Activated CD4-positive, alpha-beta memory T cell treated with anti-CD3 and anti-CD28 coated beads for 36 hours (primary cell): ENCODE measurements at regions of chr13 and their contacts with region 1.

Region 1: GRCh38 chr13:72727417-72728289 is at the starts of genes BORA and MZT1:
- DNase-seq: peak; percentile 98
- H3K4me3 Mint-ChIP-seq: peak within 1 kb of the TSS; percentile 93
- H3K27ac Mint-ChIP-seq: peak within 1 kb of the TSS; percentile 76
- H3K4me1 Mint-ChIP-seq: peaks cover 41% of the 10 kb centered on the region
- H3K27me3 Mint-ChIP-seq: peaks cover 2% of the 10 kb centered on the region
- total RNA-seq, gene BORA: 18.4 to 19.1 TPM
- total RNA-seq, gene MZT1: 27.6 to 28.6 TPM

Region 2: GRCh38 chr13:72536714-72537394 is 190.8 kb before region 1 on chr13:
- CTCF ChIA-PET with region 1: no interaction called
- POLR2A ChIA-PET with region 1: no interaction called
- intact Hi-C with region 1: no loop called
- DNase-seq: no peak
- H3K4me3 Mint-ChIP-seq: no peak overlapping the region
- H3K27ac Mint-ChIP-seq: no peak overlapping the region
- H3K4me1 Mint-ChIP-seq: no peaks in the 10 kb centered on the region
- H3K27me3 Mint-ChIP-seq: no peaks in the 10 kb centered on the region

Region 3: DNA sequence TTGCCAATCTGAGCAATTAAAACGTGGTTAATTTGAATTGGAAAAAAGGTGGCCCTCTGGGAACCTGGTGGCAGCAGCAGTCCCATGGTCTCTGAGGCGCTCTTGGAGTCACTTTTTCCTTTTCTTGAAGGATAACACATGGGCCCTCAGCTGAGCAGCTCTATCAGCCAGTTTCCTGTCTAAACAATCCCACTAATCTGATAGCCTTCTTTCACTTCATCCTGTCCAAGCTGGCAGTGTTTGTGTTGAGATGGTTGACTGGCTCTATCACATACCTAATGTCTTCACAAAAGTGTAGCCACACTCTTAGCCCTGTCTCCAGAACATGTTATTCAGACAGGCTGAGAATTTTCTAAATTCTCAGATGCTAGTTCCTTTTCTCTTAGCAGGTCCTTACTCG is 10.9 kb before region 1 on chr13:
- CTCF ChIA-PET with region 1: no interaction called
- POLR2A ChIA-PET with region 1: no interaction called
- intact Hi-C with region 1: no loop called
- DNase-seq: no peak
- H3K4me3 Mint-ChIP-seq: no peak overlapping the region
- H3K27ac Mint-ChIP-seq: no peak overlapping the region
- H3K4me1 Mint-ChIP-seq: peaks cover 4% of the 10 kb centered on the region
- H3K27me3 Mint-ChIP-seq: no peaks in the 10 kb centered on the region

Region 4: GRCh38 chr13:72745260-72745659 is 17.6 kb after region 1 on chr13:
- CTCF ChIA-PET with region 1: no interaction called
- POLR2A ChIA-PET with region 1: no interaction called
- intact Hi-C with region 1: loop called (anchors 2 kb)
- DNase-seq: no peak
- H3K4me3 Mint-ChIP-seq: no peak overlapping the region
- H3K27ac Mint-ChIP-seq: no peak overlapping the region
- H3K4me1 Mint-ChIP-seq: peaks cover 20% of the 10 kb centered on the region
- H3K27me3 Mint-ChIP-seq: no peaks in the 10 kb centered on the region

Region 5: DNA sequence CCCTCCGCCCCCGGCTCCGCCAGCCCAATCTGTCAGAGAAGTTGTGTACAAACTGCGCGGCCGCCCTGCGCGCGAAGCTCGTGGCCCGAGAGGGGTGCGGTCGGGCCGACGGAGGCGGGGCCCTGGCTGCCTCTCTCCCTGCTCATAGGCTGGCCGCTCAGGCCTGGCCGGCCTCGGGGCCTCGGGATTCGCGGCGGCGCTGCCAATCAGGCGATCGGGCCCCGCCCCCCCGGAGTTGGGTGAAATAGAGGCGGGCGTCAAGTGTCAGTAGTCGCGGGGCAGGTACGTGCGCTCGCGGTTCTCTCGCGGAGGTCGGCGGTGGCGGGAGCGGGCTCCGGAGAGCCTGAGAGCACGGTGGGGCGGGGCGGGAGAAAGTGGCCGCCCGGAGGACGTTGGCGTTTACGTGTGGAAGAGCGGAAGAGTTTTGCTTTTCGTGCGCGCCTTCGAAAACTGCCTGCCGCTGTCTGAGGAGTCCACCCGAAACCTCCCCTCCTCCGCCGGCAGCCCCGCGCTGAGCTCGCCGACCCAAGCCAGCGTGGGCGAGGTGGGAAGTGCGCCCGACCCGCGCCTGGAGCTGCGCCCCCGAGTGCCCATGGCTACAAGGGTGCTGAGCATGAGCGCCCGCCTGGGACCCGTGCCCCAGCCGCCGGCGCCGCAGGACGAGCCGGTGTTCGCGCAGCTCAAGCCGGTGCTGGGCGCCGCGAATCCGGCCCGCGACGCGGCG is 331.2 kb after region 1 on chr13 and contains the start of gene KLF5:
- CTCF ChIA-PET with region 1: no interaction called
- POLR2A ChIA-PET with region 1: no interaction called
- intact Hi-C with region 1: loop called (anchors 10 kb)
- DNase-seq: peak; percentile 97
- H3K4me3 Mint-ChIP-seq: peak within 1 kb of the TSS; percentile 75
- H3K27ac Mint-ChIP-seq: no peak within 1 kb of the TSS
- H3K4me1 Mint-ChIP-seq: peaks cover 17% of the 10 kb centered on the region
- H3K27me3 Mint-ChIP-seq: peaks cover 16% of the 10 kb centered on the region
- total RNA-seq, gene KLF5: 3.3 to 4.2 TPM

Region 6: GRCh38 chr13:73702419-73703071 is 974.9 kb after region 1 on chr13:
- CTCF ChIA-PET with region 1: no interaction called
- POLR2A ChIA-PET with region 1: no interaction called
- intact Hi-C with region 1: loop called (anchors 5 kb)
- DNase-seq: peak; percentile 56
- H3K4me3 Mint-ChIP-seq: peak overlapping the region; percentile 59
- H3K27ac Mint-ChIP-seq: peak overlapping the region; percentile 29
- H3K4me1 Mint-ChIP-seq: peaks cover 39% of the 10 kb centered on the region
- H3K27me3 Mint-ChIP-seq: no peaks in the 10 kb centered on the region